Activated B cell treated with CpG ODN at 0.5 μM for 24 hours (primary cell): ENCODE measurements at regions of chr20 and their contacts with region 1.

Region 1: DNA sequence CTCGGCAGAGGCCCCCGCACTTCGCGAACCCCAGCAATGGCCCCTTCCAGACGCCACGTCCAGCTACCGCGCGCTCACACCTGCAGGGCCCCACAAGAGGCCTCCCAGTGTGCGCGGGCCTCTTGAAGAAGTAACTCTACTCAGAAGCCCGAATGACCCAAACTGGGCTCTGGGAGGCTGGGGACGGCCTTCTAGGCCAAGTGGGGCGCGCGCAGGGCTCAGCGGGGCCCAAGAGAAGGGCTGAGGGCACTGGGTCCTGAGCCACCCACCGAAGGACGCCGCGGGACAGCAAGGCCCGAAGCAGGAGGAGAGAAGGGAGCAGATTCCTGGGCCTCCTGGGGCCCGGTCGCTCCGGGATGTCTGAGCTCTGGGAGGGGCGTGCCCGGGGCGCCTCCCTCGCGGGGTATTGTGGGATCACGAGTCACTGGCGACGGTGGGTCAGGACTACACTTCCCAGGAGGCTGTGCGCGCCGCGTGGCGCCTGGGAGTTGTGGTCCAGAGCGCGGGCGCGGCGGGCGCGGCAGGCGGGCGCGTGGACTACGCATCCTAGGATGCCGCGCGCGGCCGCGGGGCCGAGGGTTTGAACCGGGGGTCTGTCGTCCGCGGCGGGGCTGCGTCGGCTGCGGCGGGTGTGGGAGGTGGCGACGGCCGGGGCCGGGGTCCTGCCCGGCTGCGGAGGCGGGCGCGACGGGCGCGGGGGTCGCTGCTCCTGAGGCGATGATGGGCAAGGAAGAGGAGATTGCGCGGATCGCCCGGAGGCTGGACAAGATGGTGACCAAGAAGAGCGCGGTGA is at the start of gene TCEA2:
- DNase-seq: peak; percentile 94
- ATAC-seq: peak; percentile 84
- H3K4me3 Mint-ChIP-seq: peak within 1 kb of the TSS; percentile 88
- H3K27ac Mint-ChIP-seq: peak within 1 kb of the TSS; percentile 67
- H3K4me1 Mint-ChIP-seq: peaks cover 51% of the 10 kb centered on the region
- H3K27me3 Mint-ChIP-seq: no peaks in the 10 kb centered on the region
- CTCF ChIP-seq: no peak
- total RNA-seq, gene TCEA2: 20.3 and 20.7 TPM in 2 replicates

Region 2: DNA sequence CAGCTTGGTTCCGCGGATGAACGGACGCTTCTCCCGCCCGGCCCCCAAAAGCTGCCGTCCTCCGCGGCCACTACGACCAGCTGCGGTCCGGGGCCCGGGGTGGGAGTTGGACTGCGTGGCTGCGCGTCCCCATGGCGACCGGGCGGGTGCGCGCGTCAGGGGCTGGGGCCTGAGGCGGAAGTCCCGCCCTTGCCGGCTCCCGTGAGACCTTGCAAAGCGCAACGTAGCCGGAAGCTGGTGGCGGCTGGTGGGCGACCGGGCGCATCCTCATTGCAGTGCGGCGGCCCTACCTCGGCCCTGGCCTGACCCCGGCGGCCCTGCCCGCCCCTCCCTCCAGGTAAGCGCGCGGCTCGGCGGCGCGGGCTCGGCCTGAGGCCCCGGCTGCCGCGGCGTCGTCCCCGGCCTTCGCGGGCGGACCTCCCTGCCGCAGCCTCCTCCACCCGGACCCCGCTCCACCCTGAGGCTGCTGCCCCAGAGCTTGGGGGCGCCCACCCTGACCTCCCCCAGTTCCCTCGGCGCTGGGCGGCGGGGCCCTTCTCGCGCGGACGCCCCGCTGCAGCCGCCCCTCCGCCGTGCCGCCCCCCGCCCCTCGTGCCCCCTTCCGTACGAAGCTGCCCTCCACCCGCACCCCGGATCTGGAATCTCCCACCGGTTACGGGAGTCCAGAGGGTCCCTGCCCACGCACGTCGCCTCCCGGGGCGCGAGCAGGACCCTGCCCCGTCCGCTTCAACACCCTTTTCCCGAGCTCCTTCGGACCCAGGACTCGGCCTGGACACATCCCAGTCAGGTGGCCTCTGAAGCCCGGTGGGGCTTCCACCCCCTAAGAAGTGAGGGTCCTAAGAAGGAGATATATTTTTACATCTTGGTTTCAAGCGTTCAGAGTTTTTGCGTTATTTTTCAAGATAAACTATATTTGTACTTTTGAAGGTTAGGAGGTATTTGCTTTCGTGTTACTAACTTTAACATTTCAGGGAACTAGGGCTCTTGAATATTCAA is 789.9 kb before region 1 on chr20 and contains the start of gene ARFGAP1:
- CTCF ChIA-PET with region 1: no interaction called
- POLR2A ChIA-PET with region 1: no interaction called
- intact Hi-C with region 1: loop called (anchors 5 kb)
- DNase-seq: peak; percentile 94
- ATAC-seq: peak; percentile 94
- H3K4me3 Mint-ChIP-seq: peak within 1 kb of the TSS; percentile 86
- H3K27ac Mint-ChIP-seq: peak within 1 kb of the TSS; percentile 66
- H3K4me1 Mint-ChIP-seq: peaks cover 21% of the 10 kb centered on the region
- H3K27me3 Mint-ChIP-seq: no peaks in the 10 kb centered on the region
- CTCF ChIP-seq: no peak
- total RNA-seq, gene ARFGAP1: 72.4 and 85.8 TPM in 2 replicates

Region 3: DNA sequence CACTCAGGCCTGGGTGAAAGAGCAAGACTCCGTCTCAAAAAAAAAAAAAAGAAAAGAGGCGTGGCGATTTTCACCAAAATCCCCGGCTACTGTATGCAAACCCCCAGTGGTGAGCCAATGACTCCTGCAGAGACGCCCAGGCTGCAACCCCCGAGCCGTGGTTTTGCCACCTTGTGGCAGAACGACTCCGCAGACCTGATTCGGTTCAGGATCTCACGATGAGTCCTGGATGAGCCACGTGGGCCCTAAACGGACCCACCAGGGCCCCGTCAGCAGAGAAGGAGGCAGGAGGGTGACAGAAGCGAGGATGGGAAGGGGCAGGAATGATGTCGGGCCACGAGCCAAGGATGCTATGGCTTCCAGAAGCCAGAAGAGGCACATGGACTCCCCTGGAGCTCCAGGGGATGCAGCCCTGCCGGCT is 280.7 kb before region 1 on chr20:
- CTCF ChIA-PET with region 1: no interaction called
- POLR2A ChIA-PET with region 1: no interaction called
- intact Hi-C with region 1: loop called (anchors 1 kb)
- DNase-seq: no peak
- ATAC-seq: peak; percentile 33
- H3K4me3 Mint-ChIP-seq: no peak overlapping the region
- H3K27ac Mint-ChIP-seq: no peak overlapping the region
- H3K4me1 Mint-ChIP-seq: peaks cover 6% of the 10 kb centered on the region
- H3K27me3 Mint-ChIP-seq: no peaks in the 10 kb centered on the region
- CTCF ChIP-seq: no peak

Region 4: DNA sequence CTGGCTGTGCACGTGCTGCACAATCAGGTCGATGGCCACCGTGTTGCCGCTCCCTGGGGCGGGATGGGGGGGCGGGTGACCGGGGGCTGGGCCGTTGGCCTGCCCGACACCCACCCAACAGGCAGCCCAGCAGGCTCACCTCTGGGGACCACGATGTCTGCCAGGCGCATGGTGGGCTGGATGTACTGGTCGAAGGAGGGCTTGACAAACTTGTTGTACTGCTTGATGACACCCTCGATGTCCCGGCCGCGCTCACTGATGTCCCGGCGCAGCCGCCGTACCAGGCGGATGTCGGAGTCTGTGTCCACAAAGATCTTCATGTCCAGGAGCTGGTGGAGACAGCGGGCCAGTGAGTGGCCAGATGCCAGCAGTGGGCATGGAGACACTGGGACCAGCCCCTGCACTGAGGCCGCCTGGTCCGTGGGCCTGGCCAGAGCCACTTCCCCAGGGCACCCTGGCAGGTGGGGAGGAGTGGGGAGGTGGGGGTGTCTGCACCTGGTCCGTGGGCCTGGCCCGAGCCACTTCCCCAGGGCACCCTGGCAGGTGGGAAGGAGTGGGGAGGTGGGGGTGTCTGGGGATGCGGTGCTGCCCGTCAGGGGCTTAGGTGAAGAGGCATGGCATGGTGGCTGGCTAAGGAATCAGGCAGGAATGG is 118.3 kb before region 1 on chr20:
- CTCF ChIA-PET with region 1: no interaction called
- POLR2A ChIA-PET with region 1: no interaction called
- intact Hi-C with region 1: no loop called
- DNase-seq: no peak
- ATAC-seq: no peak
- H3K4me3 Mint-ChIP-seq: no peak overlapping the region
- H3K27ac Mint-ChIP-seq: no peak overlapping the region
- H3K4me1 Mint-ChIP-seq: peaks cover 41% of the 10 kb centered on the region
- H3K27me3 Mint-ChIP-seq: no peaks in the 10 kb centered on the region
- CTCF ChIP-seq: no peak

Region 5: GRCh38 chr20:63955827-63956663 is 106.7 kb before region 1 on chr20 and contains the start of gene UCKL1:
- CTCF ChIA-PET with region 1: no interaction called
- POLR2A ChIA-PET with region 1: interaction called, 4 read pairs
- intact Hi-C with region 1: loop called (anchors 1 kb)
- DNase-seq: peak; percentile 87
- ATAC-seq: peak; percentile 78
- H3K4me3 Mint-ChIP-seq: peak within 1 kb of the TSS; percentile 87
- H3K27ac Mint-ChIP-seq: peak within 1 kb of the TSS; percentile 85
- H3K4me1 Mint-ChIP-seq: peaks cover 49% of the 10 kb centered on the region
- H3K27me3 Mint-ChIP-seq: no peaks in the 10 kb centered on the region
- CTCF ChIP-seq: no peak
- total RNA-seq, gene UCKL1: 43.6 and 49.7 TPM in 2 replicates

Region 6: GRCh38 chr20:64038565-64039292 is 24.1 kb before region 1 on chr20:
- CTCF ChIA-PET with region 1: interaction called, 19 read pairs
- POLR2A ChIA-PET with region 1: interaction called, 7 read pairs
- intact Hi-C with region 1: loop called (anchors 1 kb)
- DNase-seq: peak; percentile 81
- ATAC-seq: peak; percentile 89
- H3K4me3 Mint-ChIP-seq: peak overlapping the region; percentile 73
- H3K27ac Mint-ChIP-seq: no peak overlapping the region
- H3K4me1 Mint-ChIP-seq: peaks cover 17% of the 10 kb centered on the region
- H3K27me3 Mint-ChIP-seq: peaks cover 9% of the 10 kb centered on the region
- CTCF ChIP-seq: peak; percentile 17

Region 7: GRCh38 chr20:64101731-64102621 is 39.2 kb after region 1 on chr20:
- CTCF ChIA-PET with region 1: no interaction called
- POLR2A ChIA-PET with region 1: interaction called, 5 read pairs
- intact Hi-C with region 1: loop called (anchors 2 kb)
- DNase-seq: peak; percentile 81
- ATAC-seq: peak; percentile 42
- H3K4me3 Mint-ChIP-seq: peak overlapping the region; percentile 82
- H3K27ac Mint-ChIP-seq: no peak overlapping the region
- H3K4me1 Mint-ChIP-seq: peaks cover 32% of the 10 kb centered on the region
- H3K27me3 Mint-ChIP-seq: peaks cover 5% of the 10 kb centered on the region
- CTCF ChIP-seq: no peak

Region 8: GRCh38 chr20:64203037-64203777 is 140.4 kb after region 1 on chr20:
- CTCF ChIA-PET with region 1: no interaction called
- POLR2A ChIA-PET with region 1: no interaction called
- intact Hi-C with region 1: no loop called
- DNase-seq: no peak
- ATAC-seq: no peak
- H3K4me3 Mint-ChIP-seq: no peak overlapping the region
- H3K27ac Mint-ChIP-seq: no peak overlapping the region
- H3K4me1 Mint-ChIP-seq: no peaks in the 10 kb centered on the region
- H3K27me3 Mint-ChIP-seq: peaks cover 17% of the 10 kb centered on the region
- CTCF ChIP-seq: no peak